Head of caudate nucleus (tissue), 42 donors: ENCODE measurements at regions of chr18 and their contacts with region 1.

Region 1: DNA sequence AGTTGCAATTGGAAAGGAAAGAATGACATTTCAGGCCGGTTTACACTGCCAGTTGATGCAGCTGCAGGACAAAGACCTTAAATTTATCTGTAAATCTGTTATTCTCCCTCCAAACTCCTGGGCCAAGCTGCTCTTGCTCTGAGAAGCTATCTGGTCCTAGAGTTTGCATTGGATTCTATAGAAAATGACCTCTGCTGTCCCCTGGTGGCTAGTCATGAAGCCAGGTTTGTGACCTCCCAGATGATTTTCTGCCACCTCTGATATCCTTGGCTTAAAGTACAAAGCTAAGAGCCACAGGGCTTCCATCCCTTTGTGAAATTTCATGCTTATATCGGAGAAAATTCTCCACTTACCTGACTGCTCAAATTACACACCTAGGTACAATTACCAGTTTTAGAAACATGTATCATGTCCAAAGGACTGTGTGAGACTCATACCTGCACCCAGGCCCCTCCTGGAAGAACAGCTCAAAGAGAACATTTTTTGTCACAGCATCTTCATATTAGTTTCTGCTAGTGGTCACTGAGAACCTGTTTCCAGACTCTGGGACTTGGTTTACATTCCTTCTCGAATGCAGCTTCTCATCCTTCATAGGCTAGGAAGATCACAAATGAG is 28.9 kb upstream of the IER3IP1 start:
- DNase-seq: peak in 22 of 42 donors; percentile 7 to 77 (median 26)

Region 2: GRCh38 chr18:47077111-47077510 is 127.9 kb before region 1 on chr18:
- intact Hi-C with region 1: no loop called
- DNase-seq: peak in 5 of 42 donors; percentile 4 to 57 (median 34)

Region 3: DNA sequence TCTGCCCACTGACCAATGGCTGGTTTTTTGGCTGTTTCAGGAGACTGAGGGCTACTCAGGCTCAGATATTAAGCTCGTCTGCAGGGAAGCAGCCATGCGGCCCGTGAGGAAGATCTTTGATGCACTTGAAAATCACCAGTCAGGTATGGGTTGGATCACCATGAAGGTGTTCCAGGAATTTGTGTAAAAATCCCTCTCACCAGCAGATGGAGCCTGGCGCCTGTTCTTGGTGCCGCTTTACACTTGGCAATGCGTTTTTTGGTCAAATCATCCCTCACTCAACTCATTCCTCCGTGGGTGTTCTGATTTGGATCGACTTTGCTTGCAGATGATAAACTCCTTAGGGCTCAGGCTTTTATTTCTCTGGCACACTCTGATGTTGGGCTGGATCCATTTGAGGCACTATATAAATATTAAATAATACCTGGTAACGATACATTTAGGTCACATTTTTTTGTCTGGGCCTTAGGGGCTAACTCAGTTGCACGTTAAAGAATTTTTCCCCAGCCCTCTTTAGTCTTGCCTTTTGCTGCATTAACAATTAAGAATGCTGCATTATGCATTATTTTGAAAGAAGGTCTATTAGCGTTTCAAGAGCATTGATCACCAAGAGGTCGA is 104.7 kb before region 1 on chr18:
- intact Hi-C with region 1: loop called (anchors 5 kb)
- DNase-seq: peak; percentile 16 to 87 (median 65)

Region 4: DNA sequence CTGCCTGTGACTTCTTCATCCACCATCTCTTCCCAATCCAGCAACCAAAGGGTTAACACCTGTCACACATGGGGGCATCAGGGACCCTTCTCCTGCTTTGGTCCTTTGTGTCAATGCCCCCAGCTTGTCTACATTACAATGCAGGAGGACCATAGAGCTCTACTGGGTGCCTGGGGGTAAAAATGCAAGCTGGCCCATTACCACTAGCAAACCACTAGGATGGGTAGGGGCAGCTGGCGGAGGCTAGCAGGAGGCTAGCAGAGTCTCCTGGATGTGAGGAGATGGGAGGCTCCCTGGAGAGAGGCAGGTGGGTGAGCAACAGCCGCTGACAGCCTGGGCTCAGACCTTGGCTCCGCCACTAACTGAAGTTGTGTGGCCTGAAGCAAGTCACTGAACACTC is 199.8 kb after region 1 on chr18:
- intact Hi-C with region 1: no loop called
- DNase-seq: peak in 1 of 42 donors; percentile 7